ENCODE measurements at regions of chr3 and their contacts with region 1.

Region 1: GRCh38 chr3:52339612-52340011 is 23.5 kb downstream of the DNAH1 start:
- DNase-seq: peak in 29 of 35 experiments; percentile 13 to 86 (median 38)
- ATAC-seq: peak; percentile 62 to 73 (median 68)
- H3K4me3 ChIP-seq: no peak overlapping the region
- H3K4me3 Mint-ChIP-seq: no peak overlapping the region
- H3K27ac ChIP-seq: no peak overlapping the region
- H3K27ac Mint-ChIP-seq: peak overlapping the region; percentile 17 to 55
- H3K4me1 ChIP-seq: no peaks in the 10 kb centered on the region
- H3K4me1 Mint-ChIP-seq: peaks cover 8 to 29% (median 8%) of the 10 kb centered on the region in 3 donors
- H3K27me3 ChIP-seq: no peaks in the 10 kb centered on the region
- H3K27me3 Mint-ChIP-seq: no peaks in the 10 kb centered on the region

Region 2: DNA sequence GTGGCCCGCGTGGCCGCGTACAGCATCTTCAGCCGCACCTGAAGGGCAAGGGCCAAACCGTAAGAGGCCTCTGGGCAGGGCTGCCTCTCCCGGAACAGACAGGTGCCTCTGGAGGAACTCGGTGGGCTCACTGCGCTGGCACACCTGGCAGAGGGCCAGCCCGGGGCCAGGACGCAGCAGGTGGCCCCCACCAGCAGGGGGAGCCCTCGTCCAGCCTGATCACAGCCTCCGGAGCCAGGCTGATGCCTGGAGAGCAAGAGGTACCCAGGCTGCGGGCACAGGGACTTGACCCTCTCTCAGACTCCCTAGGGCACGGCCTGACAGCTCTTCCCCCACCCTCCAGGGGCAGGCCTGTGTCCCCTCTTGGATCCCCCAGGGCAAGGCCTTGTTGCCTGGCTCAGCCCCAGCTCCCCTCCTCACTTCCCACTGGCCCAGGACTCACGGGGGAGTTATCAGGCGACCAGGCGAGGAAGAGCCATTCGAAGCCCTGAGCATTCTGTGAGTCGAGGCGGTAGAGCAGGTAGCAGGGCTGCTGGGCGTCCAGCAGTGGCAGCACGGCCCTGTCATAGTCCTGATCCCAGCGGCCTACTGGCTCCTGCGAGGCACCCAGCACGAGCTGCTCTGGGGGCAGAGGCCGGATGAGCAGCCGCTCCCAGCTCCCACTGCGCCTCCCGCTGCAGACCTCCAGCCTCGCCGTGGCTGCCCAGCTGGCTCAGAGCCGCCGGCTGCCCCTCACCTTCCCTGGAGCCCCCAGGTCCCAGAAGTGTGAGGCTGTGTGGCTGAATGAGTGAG is 107.9 kb before region 1 on chr3:
- CTCF ChIA-PET with region 1: interaction called, 12 to 36 read pairs
- POLR2A ChIA-PET with region 1: interaction called, 3 read pairs
- DNase-seq: peak; percentile 60 to 93 (median 85)
- ATAC-seq: peak; percentile 80 to 87 (median 80)
- H3K4me3 ChIP-seq: no peak overlapping the region
- H3K4me3 Mint-ChIP-seq: peak overlapping the region in 2 of 3 donors; percentile 51 to 55
- H3K27ac ChIP-seq: peak overlapping the region; percentile 13
- H3K27ac Mint-ChIP-seq: peak overlapping the region; percentile 84 to 85
- H3K4me1 ChIP-seq: peaks cover 12 to 59% of the 10 kb centered on the region in 2 experiments
- H3K4me1 Mint-ChIP-seq: peaks cover 53 to 65% (median 57%) of the 10 kb centered on the region in 3 donors
- H3K27me3 ChIP-seq: no peaks in the 10 kb centered on the region
- H3K27me3 Mint-ChIP-seq: no peaks in the 10 kb centered on the region

Region 3: GRCh38 chr3:52240059-52240879 is 99.3 kb before region 1 on chr3:
- CTCF ChIA-PET with region 1: interaction called, 8 to 10 read pairs
- POLR2A ChIA-PET with region 1: no interaction called
- DNase-seq: peak in 11 of 35 experiments; percentile 29 to 67 (median 42)
- ATAC-seq: peak in 2 of 4 experiments; percentile 10 to 17
- H3K4me3 ChIP-seq: peak overlapping the region; percentile 84 to 99
- H3K4me3 Mint-ChIP-seq: peak overlapping the region; percentile 91 to 98 (median 97)
- H3K27ac ChIP-seq: peak overlapping the region; percentile 83
- H3K27ac Mint-ChIP-seq: peak overlapping the region; percentile 89 to 91
- H3K4me1 ChIP-seq: peaks cover 54 to 77% of the 10 kb centered on the region in 2 experiments
- H3K4me1 Mint-ChIP-seq: peaks cover 81 to 87% (median 84%) of the 10 kb centered on the region in 3 donors
- H3K27me3 ChIP-seq: no peaks in the 10 kb centered on the region
- H3K27me3 Mint-ChIP-seq: no peaks in the 10 kb centered on the region